IMR-90 (cell line): ENCODE measurements at regions of chr16 and their contacts with region 1.

Region 1: GRCh38 chr16:15830832-15831451 is 25.9 kb downstream of the MYH11 start:
- DNase-seq: no peak
- ATAC-seq: no peak
- H3K4me3 ChIP-seq: no peak overlapping the region
- H3K27ac ChIP-seq: no peak overlapping the region
- H3K4me1 ChIP-seq: peaks cover 3% of the 10 kb centered on the region
- H3K27me3 ChIP-seq: peaks cover 2% of the 10 kb centered on the region; the same call in 1 of the 2 replicates
- CTCF ChIP-seq: no peak
- POLR2A ChIP-seq: no peak
- RAD21 ChIP-seq: no peak

Region 2: DNA sequence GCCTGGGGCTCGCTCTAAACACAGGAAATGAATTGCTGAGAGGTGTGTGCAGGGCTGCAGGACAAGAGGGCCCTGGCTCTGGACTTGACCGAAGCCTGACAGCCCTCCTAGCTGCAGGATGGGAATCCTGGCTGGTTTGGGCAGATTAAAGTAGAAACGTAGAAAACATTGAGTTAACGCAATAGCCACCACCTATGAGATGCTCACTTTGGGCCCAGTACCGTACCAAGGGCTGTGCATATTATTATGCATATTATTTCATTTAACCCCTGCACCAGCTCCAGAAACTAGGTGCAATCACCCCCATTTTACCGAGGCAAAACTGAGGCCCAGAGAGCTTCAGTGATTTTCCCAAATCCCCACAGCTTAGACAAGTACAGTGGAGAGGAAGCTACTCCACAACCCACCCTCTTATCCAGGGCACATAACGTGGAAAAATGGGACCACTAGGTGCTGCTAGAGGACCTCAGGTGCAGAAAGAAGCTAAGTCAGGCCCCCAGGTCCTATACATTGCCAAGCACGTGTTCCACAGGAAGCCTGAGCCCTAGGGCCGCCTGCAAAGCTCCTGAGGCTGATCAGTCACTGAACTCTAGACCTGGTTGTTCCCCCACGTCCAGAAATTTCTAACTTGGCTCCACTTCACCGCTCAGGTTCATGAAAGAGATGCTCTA is 53.3 kb before region 1 on chr16:
- CTCF ChIA-PET with region 1: no interaction called
- POLR2A ChIA-PET with region 1: no interaction called
- dilution Hi-C with region 1: no loop called
- in situ Hi-C with region 1: loop called (anchors 5 kb)
- intact Hi-C with region 1: no loop called
- DNase-seq: peak; percentile 61
- ATAC-seq: peak; percentile 75
- H3K4me3 ChIP-seq: no peak overlapping the region
- H3K27ac ChIP-seq: no peak overlapping the region
- H3K4me1 ChIP-seq: no peaks in the 10 kb centered on the region; the same call in 1 of the 2 replicates
- H3K27me3 ChIP-seq: peaks cover 9% of the 10 kb centered on the region
- CTCF ChIP-seq: peak; percentile 61
- POLR2A ChIP-seq: no peak
- RAD21 ChIP-seq: peak; percentile 80

Region 3: DNA sequence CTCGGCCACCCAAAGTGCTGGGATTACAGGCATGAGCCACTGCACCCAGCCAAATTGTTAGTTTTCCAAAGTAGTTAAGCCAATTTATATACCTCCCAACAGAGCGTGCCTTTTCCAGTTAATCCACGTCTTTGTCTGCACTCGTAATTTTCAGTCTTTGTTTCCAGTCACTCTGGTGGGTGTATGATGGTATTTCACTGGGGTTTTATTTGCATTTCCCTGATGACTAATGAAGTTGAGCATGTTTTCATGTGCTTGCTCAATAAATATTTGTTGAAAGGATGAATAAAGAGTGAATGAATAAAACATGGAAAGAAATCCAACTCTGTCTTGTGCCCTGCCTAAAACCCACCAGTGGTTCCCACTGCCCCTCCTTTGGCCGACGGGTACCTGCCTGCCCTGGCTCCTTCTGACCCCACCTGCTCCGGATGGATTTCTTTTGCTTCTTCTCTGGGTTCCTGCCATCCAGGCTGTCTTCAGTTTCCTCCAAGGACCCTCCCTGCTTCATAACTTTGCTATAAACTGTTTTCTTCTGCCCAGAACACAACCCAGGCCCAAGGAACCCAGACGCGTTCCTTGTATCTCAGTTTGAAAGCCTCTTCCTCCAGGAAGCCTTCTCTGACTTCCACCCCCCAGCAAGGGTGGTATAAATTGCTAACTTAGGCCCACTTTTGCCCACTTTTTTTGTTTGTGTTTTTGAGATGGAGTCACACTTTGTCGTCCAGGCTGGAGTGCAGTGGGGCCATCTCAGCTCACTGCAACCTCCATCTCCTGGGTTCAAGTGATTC is 115.5 kb after region 1 on chr16:
- CTCF ChIA-PET with region 1: no interaction called
- POLR2A ChIA-PET with region 1: no interaction called
- dilution Hi-C with region 1: no loop called
- in situ Hi-C with region 1: no loop called
- intact Hi-C with region 1: no loop called
- DNase-seq: peak; percentile 91
- ATAC-seq: peak; percentile 64
- H3K4me3 ChIP-seq: no peak overlapping the region
- H3K27ac ChIP-seq: peak overlapping the region; percentile 95
- H3K4me1 ChIP-seq: peaks cover 18% of the 10 kb centered on the region
- H3K27me3 ChIP-seq: no peaks in the 10 kb centered on the region
- CTCF ChIP-seq: peak; percentile 7; the same call in 1 of the 2 replicates
- POLR2A ChIP-seq: no peak
- RAD21 ChIP-seq: peak; percentile 29; the same call in 1 of the 2 replicates